HEK293 (cell line): ENCODE measurements at regions of chr12 and their contacts with region 1.

Region 1: DNA sequence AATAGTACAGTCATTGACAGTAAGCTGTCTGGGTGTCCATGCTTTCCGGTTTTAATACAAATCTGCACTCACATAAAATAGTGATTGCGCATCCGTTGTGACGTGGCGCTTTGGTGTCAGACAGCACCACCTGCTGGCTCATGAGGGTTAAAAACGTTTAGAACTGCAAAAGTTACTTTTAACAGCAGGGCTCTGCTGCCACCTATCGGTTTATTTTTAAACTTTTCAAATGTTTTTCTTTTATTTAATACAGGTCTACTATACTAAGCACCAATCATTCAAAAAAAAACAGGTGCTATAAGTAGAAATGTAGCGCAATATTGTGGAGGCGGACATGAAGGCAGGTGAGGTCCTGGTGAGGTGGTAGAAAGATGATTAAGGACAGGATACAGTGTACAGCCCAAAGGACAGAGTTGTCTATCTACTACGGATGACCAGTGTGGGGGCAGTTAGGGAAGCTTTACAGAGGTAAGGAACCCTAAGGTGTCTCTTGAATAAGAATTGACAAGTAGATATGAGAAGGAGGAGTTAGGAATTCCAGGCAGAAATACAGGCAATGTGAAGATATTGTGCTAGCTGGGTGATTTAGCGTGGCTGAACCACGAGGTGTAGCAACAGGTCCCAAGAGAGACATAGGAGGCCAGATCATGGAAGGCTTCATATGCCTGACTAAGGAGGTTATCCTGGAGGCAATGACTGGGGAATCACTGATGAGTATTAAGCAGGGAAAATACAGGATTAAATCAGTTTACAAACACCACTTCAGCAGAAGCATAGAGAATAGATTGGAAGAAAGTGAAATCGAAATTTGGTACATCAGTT is 91.5 kb upstream of the PRB2 start:
- H3K4me3 ChIP-seq: no peak overlapping the region
- H3K27ac ChIP-seq: no peak overlapping the region
- H3K4me1 ChIP-seq: no peaks in the 10 kb centered on the region
- CTCF ChIP-seq: peak; percentile 85

Region 2: DNA sequence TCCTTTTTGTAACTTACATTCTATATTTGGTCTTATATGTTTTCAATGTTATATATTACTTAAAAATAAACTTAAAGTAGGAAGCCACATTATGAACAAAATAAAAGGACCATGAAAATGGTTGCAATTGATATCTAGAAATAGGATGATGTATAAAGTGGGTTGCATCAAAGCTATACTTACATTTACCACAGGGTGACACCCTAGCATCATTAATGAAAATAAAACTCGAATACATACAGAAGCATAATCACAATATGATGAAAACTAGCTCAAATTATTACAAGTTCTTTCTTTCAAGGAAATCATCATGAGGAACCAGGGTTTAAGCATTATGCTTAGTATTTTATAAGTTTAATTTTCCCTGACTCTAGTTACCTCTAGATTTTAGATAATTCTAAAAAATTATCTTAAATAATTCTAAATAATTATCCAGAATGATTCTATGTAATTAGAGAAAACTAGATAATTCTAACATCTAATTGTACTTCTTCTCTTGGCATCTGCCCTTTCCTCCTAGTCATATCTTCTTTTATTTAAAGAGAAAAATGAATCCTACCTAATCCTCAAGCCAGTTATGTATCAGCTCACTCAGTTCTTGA is 715.6 kb before region 1 on chr12:
- CTCF ChIA-PET with region 1: interaction called, 73 read pairs
- POLR2A ChIA-PET with region 1: no interaction called
- H3K4me3 ChIP-seq: no peak overlapping the region
- H3K27ac ChIP-seq: no peak overlapping the region
- H3K4me1 ChIP-seq: no peaks in the 10 kb centered on the region
- CTCF ChIP-seq: 0 out of 2 replicates have a peak, but pooled peaks have one; percentile 36

Region 3: DNA sequence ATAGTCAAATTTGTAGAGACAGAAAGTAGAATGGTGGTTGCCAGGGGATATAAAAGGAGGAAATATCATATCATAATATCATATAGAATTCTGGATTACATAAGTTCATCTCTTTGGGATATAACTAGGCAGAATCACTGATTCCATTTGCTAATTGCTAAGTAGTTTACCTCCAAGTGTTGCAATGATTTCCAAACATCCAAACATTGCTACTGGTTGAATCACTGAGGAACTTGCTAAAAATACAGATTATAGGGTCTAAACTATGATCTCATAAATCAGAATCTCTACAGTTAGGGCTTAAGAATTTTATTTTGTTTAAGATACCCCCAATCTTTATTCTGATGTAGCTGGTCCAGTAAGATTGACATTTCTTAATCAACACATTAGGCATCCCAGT is 284.0 kb before region 1 on chr12:
- CTCF ChIA-PET with region 1: interaction called, 10 read pairs
- POLR2A ChIA-PET with region 1: no interaction called
- H3K4me3 ChIP-seq: no peak overlapping the region
- H3K27ac ChIP-seq: no peak overlapping the region
- H3K4me1 ChIP-seq: no peaks in the 10 kb centered on the region
- CTCF ChIP-seq: no peak

Region 4: GRCh38 chr12:11228296-11228879 is 258.4 kb before region 1 on chr12:
- CTCF ChIA-PET with region 1: interaction called, 106 read pairs
- POLR2A ChIA-PET with region 1: no interaction called
- H3K4me3 ChIP-seq: no peak overlapping the region
- H3K27ac ChIP-seq: no peak overlapping the region
- H3K4me1 ChIP-seq: no peaks in the 10 kb centered on the region
- CTCF ChIP-seq: peak; percentile 42; the same call in 1 of the 2 replicates

Region 5: DNA sequence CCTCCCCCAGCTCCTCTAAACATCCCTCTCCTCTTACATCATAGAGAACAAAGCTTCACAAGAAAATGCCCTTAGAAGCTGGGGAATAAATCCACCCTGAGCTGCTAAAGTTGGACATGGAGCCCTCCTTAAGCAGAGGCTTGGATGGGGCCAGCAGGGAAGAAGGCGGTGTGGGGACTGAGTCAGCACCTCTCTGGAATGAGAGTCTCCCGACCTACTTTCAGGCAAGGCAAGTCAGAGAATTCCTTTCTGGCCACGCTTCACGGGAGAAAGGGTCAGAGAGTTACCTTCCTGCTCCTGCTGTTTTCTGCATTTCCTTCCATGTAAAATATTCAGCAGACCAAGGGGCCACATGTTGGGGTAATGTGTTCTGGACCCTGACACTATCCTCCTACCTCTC is 21.9 kb after region 1 on chr12:
- CTCF ChIA-PET with region 1: interaction called, 10 read pairs
- POLR2A ChIA-PET with region 1: no interaction called
- H3K4me3 ChIP-seq: no peak overlapping the region
- H3K27ac ChIP-seq: no peak overlapping the region
- H3K4me1 ChIP-seq: no peaks in the 10 kb centered on the region
- CTCF ChIP-seq: no peak

Region 6: DNA sequence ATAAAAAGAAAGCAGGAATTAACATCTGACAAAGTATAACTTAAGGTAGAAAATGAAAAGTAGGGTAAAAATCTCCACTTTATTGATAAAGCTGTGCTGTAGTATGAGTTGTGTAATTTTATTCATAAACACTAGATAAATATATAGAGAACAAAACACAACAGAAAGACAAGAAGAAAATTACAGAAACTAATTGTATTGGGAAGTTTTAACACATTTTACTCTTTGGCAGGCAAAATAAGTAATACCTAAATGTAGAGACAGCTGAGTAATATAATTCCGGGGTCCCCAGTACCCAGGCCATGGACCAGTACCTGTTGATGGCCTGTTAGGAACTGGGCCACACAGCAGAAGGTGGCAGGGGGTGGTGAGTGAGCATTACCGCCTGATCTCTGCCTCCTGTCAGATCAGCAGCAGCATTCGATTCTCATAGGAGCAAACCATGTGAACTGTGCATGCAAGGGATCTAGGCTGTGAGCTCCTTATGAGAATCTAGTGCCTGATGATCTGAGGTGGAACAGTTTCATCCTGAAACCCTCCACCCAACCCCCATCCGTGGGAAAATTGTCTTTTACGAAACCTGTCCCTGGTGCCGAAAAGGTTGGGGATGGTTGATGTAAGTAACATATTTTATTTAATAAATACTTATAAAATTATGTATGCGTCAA is 78.3 kb after region 1 on chr12:
- CTCF ChIA-PET with region 1: no interaction called
- POLR2A ChIA-PET with region 1: no interaction called
- H3K4me3 ChIP-seq: no peak overlapping the region
- H3K27ac ChIP-seq: no peak overlapping the region
- H3K4me1 ChIP-seq: no peaks in the 10 kb centered on the region
- CTCF ChIP-seq: no peak

Region 7: GRCh38 chr12:11630046-11630706 is 143.3 kb after region 1 on chr12:
- CTCF ChIA-PET with region 1: no interaction called
- POLR2A ChIA-PET with region 1: no interaction called
- H3K4me3 ChIP-seq: no peak overlapping the region
- H3K27ac ChIP-seq: no peak overlapping the region
- H3K4me1 ChIP-seq: no peaks in the 10 kb centered on the region
- CTCF ChIP-seq: no peak